GM18951 (cell line): ENCODE measurements at regions of chr10 and their contacts with region 1.

Region 1: DNA sequence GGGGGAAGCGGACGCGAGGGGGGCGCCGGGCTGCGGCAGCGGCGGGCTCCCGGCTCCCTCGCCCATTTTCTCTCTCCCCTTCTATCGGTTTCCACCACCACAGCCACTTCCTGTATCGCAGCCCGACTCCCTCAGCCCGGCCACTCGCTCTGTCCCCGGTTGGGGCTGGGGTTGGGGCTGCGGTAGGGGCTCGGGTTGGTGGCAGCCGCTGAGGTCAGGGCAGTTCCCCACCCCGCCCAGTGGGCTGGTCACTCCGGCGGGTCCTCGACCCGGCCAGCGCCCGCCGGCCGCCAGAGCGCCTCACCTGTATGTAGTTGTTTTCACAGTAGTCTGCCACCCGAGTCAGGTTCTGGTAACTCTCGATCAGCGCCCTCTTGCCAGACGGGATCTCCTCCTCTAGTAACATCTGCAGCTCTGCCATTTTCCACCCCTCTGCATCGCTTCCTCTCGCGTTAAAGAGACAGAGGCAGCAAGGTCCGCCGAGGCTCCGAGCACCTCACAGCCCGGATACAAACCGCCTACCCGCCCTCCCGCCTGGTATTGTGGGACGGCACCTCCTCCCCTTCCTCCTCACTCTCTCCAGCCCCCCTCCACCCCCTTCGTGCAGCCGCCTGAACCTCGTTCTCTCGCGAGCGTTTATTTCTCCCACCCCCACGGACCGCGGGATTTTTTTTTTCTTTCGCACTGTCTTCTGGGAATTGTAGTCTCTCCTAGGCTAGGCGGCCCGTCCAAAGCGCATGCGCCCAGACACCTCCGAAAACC is at the start of gene ABI1:
- POLR2A ChIP-seq: peak; percentile 77

Region 2: DNA sequence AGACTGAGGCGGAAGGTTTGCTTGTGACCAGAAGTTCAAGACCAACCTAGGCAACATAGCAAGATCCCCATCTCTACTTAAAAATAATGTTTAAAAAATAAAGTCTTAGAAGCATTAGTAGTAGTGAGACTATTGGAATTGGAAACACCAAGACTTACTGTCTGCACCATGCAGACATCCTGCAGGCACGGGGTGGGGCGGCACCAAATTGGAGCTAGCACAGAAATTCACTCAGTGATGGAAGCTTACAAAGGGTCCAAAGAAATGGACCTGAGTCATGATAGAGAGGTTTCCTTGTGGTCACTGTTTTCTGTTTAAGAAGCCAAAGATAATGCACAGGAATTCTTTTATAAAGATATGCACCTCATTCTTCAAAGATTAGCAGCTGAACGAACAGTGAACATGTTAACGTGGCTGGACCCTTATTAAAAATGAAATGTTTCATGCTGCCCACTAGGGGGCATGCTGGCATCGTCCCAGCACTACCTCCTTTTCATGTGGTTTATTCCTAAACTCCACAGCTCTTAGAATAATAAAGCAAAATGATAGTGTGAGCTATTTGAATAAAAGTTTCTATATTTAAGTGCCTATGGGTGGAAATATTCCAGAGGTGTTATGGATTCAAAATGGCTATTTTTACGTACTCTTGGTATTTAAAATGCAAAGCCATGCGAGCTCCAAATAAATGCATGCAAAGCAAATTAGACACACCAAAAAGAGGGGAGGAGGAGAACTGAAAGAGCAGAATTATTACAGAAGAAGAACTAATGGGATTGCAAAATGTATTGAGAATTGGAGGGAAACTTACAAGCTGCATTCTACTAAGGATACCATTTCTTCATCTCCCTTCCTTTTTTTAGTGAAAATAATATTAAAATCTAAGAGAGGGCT is 134.5 kb before region 1 on chr10:
- in situ Hi-C with region 1: loop called (anchors 10 kb)
- POLR2A ChIP-seq: no peak

Region 3: DNA sequence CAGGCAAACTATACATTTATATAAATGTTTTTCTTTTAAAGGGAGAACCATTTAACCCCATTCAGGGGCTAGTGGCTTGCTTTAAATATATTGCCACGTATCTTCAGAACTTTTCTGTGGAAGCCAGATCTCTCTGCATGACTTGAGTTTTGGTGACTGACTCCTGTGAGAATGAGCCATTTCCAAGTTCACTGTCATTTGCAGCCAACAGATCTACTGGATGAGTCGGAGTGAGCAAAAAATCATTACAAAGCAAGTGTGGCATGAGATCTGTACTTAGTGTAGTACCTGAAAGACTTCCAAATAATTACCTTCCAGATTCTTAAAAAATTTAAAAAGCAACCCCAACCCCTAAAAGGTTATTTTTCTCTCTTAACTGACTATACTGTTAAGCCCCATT is 117.5 kb before region 1 on chr10:
- in situ Hi-C with region 1: loop called (anchors 5 kb)
- POLR2A ChIP-seq: no peak

Region 4: GRCh38 chr10:27083063-27083462 is 222.4 kb after region 1 on chr10:
- in situ Hi-C with region 1: no loop called
- POLR2A ChIP-seq: no peak